ENCODE measurements at regions of chr19 and their contacts with region 1.

Region 1: GRCh38 chr19:4593409-4593851 is 33.9 kb upstream of the SEMA6B start:
- DNase-seq: peak; percentile 78
- H3K4me3 Mint-ChIP-seq: no peak overlapping the region
- H3K27ac Mint-ChIP-seq: no peak overlapping the region
- H3K4me1 Mint-ChIP-seq: no peaks in the 10 kb centered on the region
- H3K27me3 Mint-ChIP-seq: no peaks in the 10 kb centered on the region
- CTCF ChIP-seq: no peak

Region 2: DNA sequence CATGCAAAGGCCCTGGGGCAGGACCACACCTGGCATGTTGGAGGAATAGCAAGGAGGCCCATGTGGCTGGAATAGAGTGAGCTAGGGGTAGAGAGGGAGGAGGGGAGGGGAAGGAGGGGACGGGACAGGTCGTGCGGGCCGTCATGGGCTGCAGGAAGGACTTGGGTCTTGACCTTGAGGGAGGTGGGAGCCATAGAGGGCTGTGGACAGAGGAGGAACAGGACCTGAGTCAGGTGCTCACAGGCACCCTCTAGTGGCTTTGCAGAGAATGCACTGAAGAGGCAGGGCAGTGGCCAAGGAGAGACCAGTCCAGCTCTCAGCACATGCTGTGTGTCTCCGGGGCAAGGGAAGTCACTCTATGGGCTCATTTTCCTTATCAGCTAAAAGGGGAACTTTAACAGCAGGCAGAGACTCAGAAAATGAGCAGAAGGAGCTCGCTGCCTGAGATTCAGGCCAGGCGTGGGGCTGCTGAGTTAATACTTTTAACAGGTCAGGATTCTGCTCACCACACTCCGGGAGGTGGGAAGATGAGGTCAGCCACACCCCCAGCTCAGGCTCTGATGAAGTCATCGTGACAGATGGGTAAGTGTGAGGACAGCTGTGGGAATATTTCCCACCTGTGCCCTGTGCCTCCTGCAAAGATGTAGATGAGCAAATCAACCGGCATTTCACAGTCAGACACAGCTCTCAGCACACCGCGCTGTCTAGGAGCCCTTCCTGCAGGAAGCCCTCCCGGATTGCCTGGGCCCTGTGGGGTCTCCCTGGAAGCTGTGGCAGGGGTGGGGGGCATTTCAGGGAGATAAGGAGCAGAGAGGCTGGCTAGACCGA is 39.9 kb after region 1 on chr19:
- CTCF ChIA-PET with region 1: interaction called, 13 read pairs
- POLR2A ChIA-PET with region 1: interaction called, 9 read pairs
- intact Hi-C with region 1: no loop called
- DNase-seq: peak; percentile 79
- H3K4me3 Mint-ChIP-seq: no peak overlapping the region
- H3K27ac Mint-ChIP-seq: no peak overlapping the region
- H3K4me1 Mint-ChIP-seq: peaks cover 18% of the 10 kb centered on the region
- H3K27me3 Mint-ChIP-seq: no peaks in the 10 kb centered on the region
- CTCF ChIP-seq: peak; percentile 86